ENCODE measurements at regions of chr6 and their contacts with region 1.

Region 1: GRCh38 chr6:97497713-97498331 is 214.8 kb upstream of the MMS22L start:
- DNase-seq: peak; percentile 8 to 57 (median 28)
- ATAC-seq: peak; percentile 91
- H3K4me3 ChIP-seq: no peak overlapping the region
- H3K27ac ChIP-seq: no peak overlapping the region
- H3K4me1 ChIP-seq: no peaks in the 10 kb centered on the region
- H3K27me3 ChIP-seq: no peaks in the 10 kb centered on the region
- CTCF ChIP-seq: peak; percentile 45 to 62 (median 60)
- EP300 ChIP-seq: no peak
- POLR2A ChIP-seq: no peak
- RAD21 ChIP-seq: peak; percentile 56 to 71

Region 2: DNA sequence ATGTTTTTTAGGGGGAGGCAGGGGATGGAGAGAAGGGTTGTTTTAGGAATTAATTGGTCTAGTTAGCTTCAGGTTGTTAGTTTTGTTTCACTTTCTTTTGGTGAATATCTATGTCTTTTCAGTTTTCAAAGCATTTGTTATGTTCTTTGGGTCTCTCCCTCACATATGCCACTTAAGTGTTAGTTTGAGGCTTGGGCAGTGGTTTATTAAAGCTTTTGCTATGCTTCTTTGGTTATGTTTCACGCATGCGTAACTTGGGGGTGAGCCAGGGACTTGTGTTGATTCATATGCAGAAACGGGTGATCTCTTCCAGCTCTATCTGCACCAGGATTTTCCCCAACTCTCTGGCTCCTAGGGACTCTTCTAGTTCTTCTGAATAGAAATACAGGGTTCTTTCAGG is 203.4 kb before region 1 on chr6:
- CTCF ChIA-PET with region 1: no interaction called
- POLR2A ChIA-PET with region 1: no interaction called
- in situ Hi-C with region 1: no loop called
- intact Hi-C with region 1: no loop called
- DNase-seq: no peak
- ATAC-seq: no peak
- H3K4me3 ChIP-seq: no peak overlapping the region
- H3K27ac ChIP-seq: no peak overlapping the region
- H3K4me1 ChIP-seq: no peaks in the 10 kb centered on the region
- H3K27me3 ChIP-seq: no peaks in the 10 kb centered on the region; a peak in 3 of 5 replicates
- CTCF ChIP-seq: no peak
- EP300 ChIP-seq: no peak
- POLR2A ChIP-seq: no peak
- RAD21 ChIP-seq: no peak

Region 3: DNA sequence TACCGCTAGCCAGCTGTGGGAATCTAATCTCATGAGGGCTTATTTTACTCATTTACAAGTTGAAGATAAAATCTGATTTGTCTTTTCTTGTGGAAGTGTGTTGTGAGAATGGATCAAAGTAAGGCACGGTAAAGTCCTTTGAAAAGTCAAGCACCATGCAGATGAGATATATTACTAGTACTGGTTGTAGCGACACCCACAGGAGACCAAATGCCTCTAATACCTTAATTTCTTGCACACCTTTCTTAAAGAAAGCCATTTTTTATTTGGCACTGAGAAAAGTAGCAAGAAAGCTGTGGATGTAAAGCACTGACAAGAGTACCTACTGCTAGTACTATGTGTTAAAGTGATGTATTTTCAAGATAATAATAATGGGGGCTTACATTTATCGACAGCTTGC is 23.8 kb before region 1 on chr6:
- CTCF ChIA-PET with region 1: no interaction called
- POLR2A ChIA-PET with region 1: no interaction called
- in situ Hi-C with region 1: no loop called
- intact Hi-C with region 1: no loop called
- DNase-seq: no peak
- ATAC-seq: no peak
- H3K4me3 ChIP-seq: no peak overlapping the region
- H3K27ac ChIP-seq: no peak overlapping the region
- H3K4me1 ChIP-seq: no peaks in the 10 kb centered on the region
- H3K27me3 ChIP-seq: no peaks in the 10 kb centered on the region
- CTCF ChIP-seq: no peak
- EP300 ChIP-seq: no peak
- POLR2A ChIP-seq: no peak
- RAD21 ChIP-seq: no peak

Region 4: GRCh38 chr6:97563529-97563928 is 65.7 kb after region 1 on chr6:
- CTCF ChIA-PET with region 1: no interaction called
- POLR2A ChIA-PET with region 1: no interaction called
- in situ Hi-C with region 1: no loop called
- intact Hi-C with region 1: no loop called
- DNase-seq: no peak
- ATAC-seq: no peak
- H3K4me3 ChIP-seq: no peak overlapping the region
- H3K27ac ChIP-seq: no peak overlapping the region
- H3K4me1 ChIP-seq: no peaks in the 10 kb centered on the region
- H3K27me3 ChIP-seq: no peaks in the 10 kb centered on the region
- CTCF ChIP-seq: no peak
- EP300 ChIP-seq: no peak
- POLR2A ChIP-seq: no peak
- RAD21 ChIP-seq: no peak

Region 5: DNA sequence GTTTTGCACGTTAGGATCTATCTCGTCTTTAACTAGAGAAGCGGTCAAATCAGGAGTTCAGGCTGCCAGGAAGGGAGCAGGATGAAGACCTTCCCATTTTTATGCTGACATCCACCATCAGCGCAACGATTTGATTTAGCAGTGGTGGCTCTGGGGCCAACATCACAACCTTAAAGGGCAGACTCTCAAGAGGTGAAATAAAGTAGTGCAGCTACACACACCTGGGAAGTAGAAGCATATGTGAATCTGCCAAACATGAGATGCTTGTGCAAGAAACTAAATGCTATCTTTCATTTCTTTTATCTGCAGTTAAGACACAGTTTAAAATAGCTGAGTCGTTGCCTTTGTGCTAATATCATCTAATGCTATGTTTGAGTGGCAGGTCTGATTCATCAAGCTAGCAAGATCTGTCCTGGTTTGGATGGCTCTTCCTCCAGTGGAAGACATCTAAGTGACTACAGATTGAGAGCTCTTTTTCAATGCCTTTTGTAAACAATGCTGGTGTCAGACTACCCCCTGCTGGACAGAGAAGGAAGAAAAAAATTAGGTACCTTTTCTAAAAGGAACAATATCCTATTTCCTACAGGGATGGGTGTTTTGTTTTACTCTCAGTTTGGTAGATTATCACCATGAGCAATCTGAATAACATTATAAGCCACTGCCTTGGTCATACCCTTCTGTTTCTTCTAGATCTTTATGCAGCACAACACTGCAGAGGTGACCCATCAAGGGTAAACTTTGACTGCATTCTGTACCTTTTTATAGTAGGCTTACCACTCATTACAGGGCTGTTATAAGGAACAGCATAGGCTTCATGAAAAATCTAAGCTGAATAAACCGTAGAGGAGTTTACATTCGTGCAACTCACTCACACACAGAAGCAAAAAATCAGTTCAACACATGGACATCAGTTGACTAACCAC is 1621.5 kb after region 1 on chr6:
- CTCF ChIA-PET with region 1: interaction called, 3 read pairs
- POLR2A ChIA-PET with region 1: no interaction called
- in situ Hi-C with region 1: no loop called
- intact Hi-C with region 1: loop called (anchors 5 kb)
- DNase-seq: peak; percentile 30 to 53 (median 40)
- ATAC-seq: peak; percentile 59; the same call in 2 of the 3 replicates
- H3K4me3 ChIP-seq: no peak overlapping the region
- H3K27ac ChIP-seq: no peak overlapping the region
- H3K4me1 ChIP-seq: no peaks in the 10 kb centered on the region
- H3K27me3 ChIP-seq: no peaks in the 10 kb centered on the region
- CTCF ChIP-seq: peak; percentile 51 to 75 (median 64); a peak in 5 of 6 replicates
- EP300 ChIP-seq: no peak
- POLR2A ChIP-seq: no peak
- RAD21 ChIP-seq: peak; percentile 78 to 87